ENCODE measurements at regions of chr5 and their contacts with region 1.

Region 1: GRCh38 chr5:177113566-177114424 is 19.8 kb upstream of the NSD1 start:
- DNase-seq: no peak
- H3K4me3 ChIP-seq: no peak overlapping the region
- CTCF ChIP-seq: peak; percentile 97

Region 2: DNA sequence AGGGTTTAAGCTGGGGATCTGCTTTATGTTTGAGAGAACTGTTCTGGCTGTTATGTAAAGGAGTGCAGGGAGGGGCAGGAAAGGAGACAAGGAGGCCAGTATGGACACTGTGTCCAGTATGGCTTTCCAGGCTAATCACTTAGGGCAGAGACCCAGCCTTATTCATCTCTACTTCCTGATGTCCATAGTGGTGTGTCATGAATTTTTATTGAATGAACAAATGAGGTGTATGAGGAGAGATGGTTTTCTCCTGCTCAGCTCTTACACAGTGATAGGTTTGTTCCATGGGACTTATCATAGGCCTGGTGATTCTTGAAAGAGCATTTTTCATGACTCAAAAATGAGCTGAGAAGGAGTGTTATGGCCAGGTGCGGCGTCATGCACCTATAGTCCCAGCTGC is 47.6 kb before region 1 on chr5:
- CTCF ChIA-PET with region 1: interaction called, 158 read pairs
- POLR2A ChIA-PET with region 1: no interaction called
- DNase-seq: no peak
- H3K4me3 ChIP-seq: no peak overlapping the region
- CTCF ChIP-seq: no peak

Region 3: DNA sequence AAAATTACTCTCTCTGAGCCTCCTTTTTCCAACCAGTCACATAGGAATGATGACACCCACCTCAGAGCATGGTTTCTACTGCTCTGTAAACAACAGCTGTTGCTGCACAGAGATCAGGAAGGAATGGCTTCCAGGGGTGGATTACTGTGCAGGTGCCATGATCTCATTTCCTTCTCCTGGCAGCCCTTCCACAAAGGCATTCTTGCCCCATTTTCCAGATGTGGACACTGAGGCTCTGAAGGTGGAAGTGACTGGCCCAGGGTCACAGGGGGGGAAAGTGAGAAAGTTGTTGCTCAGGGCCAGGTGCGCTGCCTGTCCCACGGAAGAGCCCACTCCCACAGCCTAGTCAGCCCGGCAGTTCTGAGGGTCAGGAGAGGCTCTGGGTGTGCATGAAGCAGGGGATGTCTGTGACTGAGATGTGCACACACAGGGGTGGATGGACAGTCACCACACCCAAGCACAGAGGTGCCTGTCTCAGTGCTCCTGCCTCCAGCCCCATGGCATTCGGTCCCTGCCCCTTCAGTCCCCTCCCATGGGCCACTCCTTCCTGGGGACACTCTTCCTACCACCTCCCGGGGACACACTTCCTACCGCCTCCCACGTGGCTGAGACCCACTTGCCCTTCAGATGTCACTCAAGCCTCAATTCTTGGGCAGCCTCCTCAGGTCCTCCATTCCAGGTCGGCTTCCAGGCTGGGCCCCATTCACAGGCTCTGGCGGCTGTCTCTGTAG is 10.1 kb before region 1 on chr5:
- CTCF ChIA-PET with region 1: interaction called, 102 read pairs
- POLR2A ChIA-PET with region 1: no interaction called
- DNase-seq: no peak
- H3K4me3 ChIP-seq: no peak overlapping the region
- CTCF ChIP-seq: no peak

Region 4: GRCh38 chr5:177265395-177265794 is 151.6 kb after region 1 on chr5:
- CTCF ChIA-PET with region 1: interaction called, 31 read pairs
- POLR2A ChIA-PET with region 1: no interaction called
- DNase-seq: no peak
- H3K4me3 ChIP-seq: no peak overlapping the region
- CTCF ChIP-seq: no peak

Region 5: DNA sequence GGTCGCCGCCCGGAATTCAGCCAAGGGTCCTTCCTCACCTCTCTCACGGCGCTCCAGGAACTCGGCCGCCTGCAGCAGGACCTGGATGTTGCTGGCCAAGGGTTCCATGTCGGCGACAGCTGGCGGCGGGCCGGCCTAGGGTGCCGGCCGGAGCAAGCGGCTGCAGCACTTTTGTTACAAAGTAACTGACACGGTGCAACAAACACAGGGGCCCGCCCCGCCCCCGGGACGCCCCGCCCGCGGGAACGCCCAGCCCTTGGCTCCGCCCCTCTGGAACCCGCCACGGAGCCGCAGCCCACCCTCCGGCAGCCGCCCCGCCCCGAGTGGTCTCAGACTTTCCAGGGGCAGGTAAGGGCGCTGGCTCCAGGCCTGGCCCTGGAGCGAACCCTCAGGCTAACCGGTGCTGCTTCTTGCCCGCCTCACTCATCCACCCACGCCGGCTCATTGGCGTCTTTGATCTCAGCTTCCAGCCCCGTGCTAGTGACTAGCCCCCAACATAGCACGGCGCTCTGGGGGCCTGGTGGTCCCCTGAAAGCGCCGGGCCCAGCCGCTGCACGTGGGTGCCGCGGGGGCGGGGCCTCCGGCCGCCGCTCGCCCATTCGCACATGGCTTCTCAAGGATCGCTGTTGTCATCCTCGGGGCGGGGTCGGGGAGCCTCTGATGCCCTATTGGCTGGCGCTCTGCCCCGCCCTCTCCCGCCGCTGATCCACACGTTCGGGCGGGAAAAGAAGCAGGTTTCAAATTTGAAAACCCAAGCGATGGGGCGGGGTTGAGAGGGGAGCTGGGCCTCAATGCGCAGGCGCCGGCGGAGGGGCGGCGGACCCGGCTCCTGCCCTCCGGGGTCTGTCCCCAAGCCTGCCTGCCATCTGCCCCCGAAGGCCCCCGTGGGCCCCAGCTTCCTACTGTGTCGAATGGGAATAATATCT is 198.2 kb after region 1 on chr5 and contains the start of gene MXD3:
- CTCF ChIA-PET with region 1: interaction called, 147 read pairs
- POLR2A ChIA-PET with region 1: no interaction called
- DNase-seq: no peak
- H3K4me3 ChIP-seq: peak within 1 kb of the TSS; percentile 68
- CTCF ChIP-seq: no peak

Region 6: GRCh38 chr5:177390363-177391300 is 276.8 kb after region 1 on chr5:
- CTCF ChIA-PET with region 1: interaction called, 34 read pairs
- POLR2A ChIA-PET with region 1: no interaction called
- DNase-seq: no peak
- H3K4me3 ChIP-seq: no peak overlapping the region
- CTCF ChIP-seq: peak; percentile 89

Measured in AG04449 (cell line).